Activated CD8-positive, alpha-beta T cell treated with anti-CD3 and anti-CD28 coated beads, Interleukin-2, amount 10 ng/mL, durations not matched to agents 7 days and 5 days (primary cell): ENCODE measurements at regions of chr1 and their contacts with region 1.

Region 1: GRCh38 chr1:201559679-201560162 is 20.8 kb downstream of the NAV1 start:
- DNase-seq: peak; percentile 77
- ATAC-seq: peak; percentile 90
- H3K4me3 Mint-ChIP-seq: no peak overlapping the region
- H3K27ac Mint-ChIP-seq: no peak overlapping the region
- H3K4me1 Mint-ChIP-seq: peaks cover 11% of the 10 kb centered on the region
- H3K27me3 Mint-ChIP-seq: no peaks in the 10 kb centered on the region

Region 2: DNA sequence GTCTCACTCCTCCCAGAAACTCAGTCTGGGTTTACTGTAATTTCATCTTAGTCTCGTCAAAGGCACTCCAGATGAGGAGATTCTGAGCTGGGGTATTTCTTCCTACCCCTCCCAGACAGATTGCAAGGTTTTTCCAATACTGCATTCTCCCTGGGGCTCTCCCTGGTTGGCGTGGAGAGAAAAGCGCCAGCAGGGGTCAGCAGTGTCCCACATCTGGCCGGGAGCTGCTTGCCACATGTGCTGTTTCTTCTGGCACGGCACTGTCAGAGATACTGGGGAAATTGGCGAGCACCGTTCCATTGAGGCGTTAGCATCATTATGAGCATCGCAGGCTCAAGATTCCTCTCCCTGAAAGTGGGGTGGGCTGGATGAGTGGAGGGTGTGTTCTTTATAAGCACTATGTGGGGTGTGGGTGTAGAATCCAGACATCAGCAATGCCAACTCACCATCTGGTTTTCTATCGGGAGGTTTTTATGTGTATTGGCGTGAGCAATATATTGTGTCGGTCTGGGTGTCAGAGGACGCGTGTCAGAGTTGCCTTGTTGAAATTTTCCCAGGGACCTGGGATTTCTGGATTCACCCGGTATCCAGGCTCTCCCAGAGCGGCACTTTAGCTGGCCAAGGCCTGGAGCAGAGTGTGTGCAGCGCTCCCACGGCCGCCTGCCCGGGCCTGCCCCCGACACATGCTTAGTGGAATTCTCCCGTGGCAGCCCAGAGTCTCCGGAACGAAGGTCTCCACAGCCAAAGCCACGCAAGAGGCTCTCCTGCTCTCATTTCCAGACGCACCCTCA is 28.8 kb before region 1 on chr1:
- CTCF ChIA-PET with region 1: interaction called, 10 read pairs
- POLR2A ChIA-PET with region 1: no interaction called
- DNase-seq: peak; percentile 52
- ATAC-seq: peak; percentile 60
- H3K4me3 Mint-ChIP-seq: no peak overlapping the region
- H3K27ac Mint-ChIP-seq: no peak overlapping the region
- H3K4me1 Mint-ChIP-seq: no peaks in the 10 kb centered on the region
- H3K27me3 Mint-ChIP-seq: peaks cover 6% of the 10 kb centered on the region

Region 3: GRCh38 chr1:201570886-201571624 is 11.3 kb after region 1 on chr1:
- CTCF ChIA-PET with region 1: interaction called, 10 read pairs
- POLR2A ChIA-PET with region 1: no interaction called
- DNase-seq: no peak
- ATAC-seq: no peak
- H3K4me3 Mint-ChIP-seq: no peak overlapping the region
- H3K27ac Mint-ChIP-seq: no peak overlapping the region
- H3K4me1 Mint-ChIP-seq: no peaks in the 10 kb centered on the region
- H3K27me3 Mint-ChIP-seq: peaks cover 1% of the 10 kb centered on the region

Region 4: DNA sequence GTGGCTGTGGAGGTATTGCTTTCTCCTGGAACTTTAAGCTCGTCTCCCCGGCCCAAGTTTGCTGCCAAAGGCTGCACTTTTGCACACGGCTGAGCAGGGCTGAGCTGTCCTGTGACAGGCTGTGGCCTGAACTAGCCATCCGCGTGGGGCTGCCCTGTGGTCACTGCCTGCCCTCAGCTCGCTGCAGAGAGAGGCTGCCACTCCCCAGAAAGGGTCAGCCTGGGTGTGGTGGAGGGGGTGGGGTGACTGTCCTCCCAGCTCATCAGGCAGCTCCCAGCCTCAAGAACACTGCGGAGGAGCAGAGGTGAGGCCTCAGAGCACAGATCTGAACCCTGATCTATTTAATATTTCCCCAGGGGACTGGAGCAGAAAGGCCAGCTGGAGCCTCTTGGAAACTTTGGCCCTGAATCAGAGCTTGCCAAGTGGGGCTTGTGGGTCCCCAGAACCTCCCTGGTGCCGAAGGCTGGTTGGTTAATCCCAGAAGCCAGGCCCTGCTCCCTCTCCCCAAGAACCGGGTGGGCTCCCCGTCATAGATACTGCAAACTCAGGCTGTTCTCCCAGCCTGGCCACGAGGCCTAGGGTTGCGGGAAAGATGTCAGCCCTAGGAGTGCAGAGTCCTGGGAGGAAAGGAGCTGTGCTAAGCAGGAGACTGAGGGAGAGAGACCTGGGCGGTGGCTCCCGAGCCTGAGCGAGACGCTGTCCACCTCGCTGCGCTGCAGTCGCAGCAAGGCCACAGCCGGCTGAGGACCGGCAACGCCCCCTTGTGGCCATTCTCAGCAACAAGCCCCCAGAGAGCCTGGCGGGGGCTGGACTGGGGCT is 144.1 kb after region 1 on chr1:
- CTCF ChIA-PET with region 1: interaction called, 52 read pairs
- POLR2A ChIA-PET with region 1: no interaction called
- DNase-seq: peak; percentile 80
- ATAC-seq: peak; percentile 94
- H3K4me3 Mint-ChIP-seq: no peak overlapping the region
- H3K27ac Mint-ChIP-seq: no peak overlapping the region
- H3K4me1 Mint-ChIP-seq: no peaks in the 10 kb centered on the region
- H3K27me3 Mint-ChIP-seq: peaks cover 4% of the 10 kb centered on the region

Region 5: GRCh38 chr1:201709564-201710295 is 150.0 kb after region 1 on chr1:
- CTCF ChIA-PET with region 1: interaction called, 52 read pairs
- POLR2A ChIA-PET with region 1: no interaction called
- DNase-seq: peak; percentile 70
- ATAC-seq: peak; percentile 96
- H3K4me3 Mint-ChIP-seq: no peak overlapping the region
- H3K27ac Mint-ChIP-seq: no peak overlapping the region
- H3K4me1 Mint-ChIP-seq: no peaks in the 10 kb centered on the region
- H3K27me3 Mint-ChIP-seq: no peaks in the 10 kb centered on the region

Region 6: GRCh38 chr1:201792534-201793305 is 233.0 kb after region 1 on chr1:
- CTCF ChIA-PET with region 1: interaction called, 15 read pairs
- POLR2A ChIA-PET with region 1: no interaction called
- DNase-seq: peak; percentile 65
- ATAC-seq: peak; percentile 78
- H3K4me3 Mint-ChIP-seq: no peak overlapping the region
- H3K27ac Mint-ChIP-seq: no peak overlapping the region
- H3K4me1 Mint-ChIP-seq: peaks cover 24% of the 10 kb centered on the region
- H3K27me3 Mint-ChIP-seq: peaks cover under 1% of the 10 kb centered on the region